ENCODE measurements at regions of chr16 and their contacts with region 1.

Region 1: GRCh38 chr16:87203060-87203656 is 114.0 kb downstream of the C16orf95 start:
- DNase-seq: peak; percentile 86
- ATAC-seq: peak; percentile 90
- H3K4me3 Mint-ChIP-seq: no peak overlapping the region
- H3K27ac Mint-ChIP-seq: peak overlapping the region; percentile 18; the same call in 1 of the 2 replicates
- H3K4me1 Mint-ChIP-seq: peaks cover 24% of the 10 kb centered on the region
- H3K27me3 Mint-ChIP-seq: no peaks in the 10 kb centered on the region; the same call in 1 of the 2 replicates
- CTCF ChIP-seq: peak; percentile 72

Region 2: DNA sequence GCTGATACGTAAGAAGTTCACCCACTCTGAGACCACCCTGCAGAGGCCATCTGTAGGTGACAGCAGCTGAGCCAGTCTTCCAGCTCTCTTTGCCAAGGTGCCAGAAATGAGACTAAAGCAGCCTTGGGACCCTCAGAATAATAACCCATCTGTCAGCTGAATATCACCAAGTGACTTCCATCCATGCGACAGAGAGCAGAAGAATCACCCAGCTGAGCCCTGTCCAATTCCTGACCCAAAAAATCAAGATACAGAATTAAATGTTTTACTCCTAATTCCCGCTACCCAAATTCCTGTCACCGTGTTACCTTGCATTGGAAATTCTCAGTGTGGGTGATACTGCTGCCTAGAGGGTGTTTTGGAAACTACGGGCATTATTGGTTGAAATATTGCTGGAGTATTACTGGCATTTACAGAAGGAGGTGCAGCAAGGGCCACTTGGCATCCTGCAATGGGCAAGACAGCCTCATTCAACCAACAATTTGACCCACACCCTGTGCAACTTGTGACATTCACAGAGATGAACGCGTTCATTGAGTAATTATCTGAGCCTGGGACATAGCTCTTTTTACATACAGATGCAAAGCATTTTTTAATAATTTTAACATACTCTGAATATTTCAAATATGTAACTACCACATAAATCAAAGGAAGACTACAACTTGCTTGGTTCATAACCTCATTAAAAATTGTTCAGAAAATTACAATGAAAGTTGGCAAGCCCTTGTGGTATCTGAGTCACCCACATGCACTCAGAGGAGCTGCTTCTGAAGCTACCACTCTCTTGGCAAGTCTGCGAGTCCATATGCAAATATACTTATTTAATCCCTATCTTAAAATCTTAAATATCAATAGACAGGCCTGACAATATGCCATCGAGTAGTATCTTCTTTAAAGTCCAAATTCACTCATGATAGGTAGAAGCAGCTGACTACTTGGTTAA is 12.6 kb before region 1 on chr16:
- CTCF ChIA-PET with region 1: interaction called, 13 read pairs
- POLR2A ChIA-PET with region 1: no interaction called
- DNase-seq: no peak
- ATAC-seq: no peak
- H3K4me3 Mint-ChIP-seq: no peak overlapping the region
- H3K27ac Mint-ChIP-seq: no peak overlapping the region
- H3K4me1 Mint-ChIP-seq: no peaks in the 10 kb centered on the region
- H3K27me3 Mint-ChIP-seq: peaks cover 4% of the 10 kb centered on the region
- CTCF ChIP-seq: no peak

Region 3: GRCh38 chr16:87233926-87234325 is 30.8 kb after region 1 on chr16:
- CTCF ChIA-PET with region 1: interaction called, 16 read pairs
- POLR2A ChIA-PET with region 1: interaction called, 4 read pairs
- DNase-seq: peak; percentile 34
- ATAC-seq: peak; percentile 51
- H3K4me3 Mint-ChIP-seq: no peak overlapping the region
- H3K27ac Mint-ChIP-seq: no peak overlapping the region
- H3K4me1 Mint-ChIP-seq: no peaks in the 10 kb centered on the region
- H3K27me3 Mint-ChIP-seq: no peaks in the 10 kb centered on the region
- CTCF ChIP-seq: no peak

Region 4: GRCh38 chr16:87297918-87298631 is 94.9 kb after region 1 on chr16:
- CTCF ChIA-PET with region 1: interaction called, 10 read pairs
- POLR2A ChIA-PET with region 1: no interaction called
- DNase-seq: peak; percentile 82
- ATAC-seq: peak; percentile 87
- H3K4me3 Mint-ChIP-seq: no peak overlapping the region
- H3K27ac Mint-ChIP-seq: no peak overlapping the region
- H3K4me1 Mint-ChIP-seq: no peaks in the 10 kb centered on the region
- H3K27me3 Mint-ChIP-seq: no peaks in the 10 kb centered on the region
- CTCF ChIP-seq: peak; percentile 49